ENCODE measurements at regions of chr1 and their contacts with region 1.

Region 1: DNA sequence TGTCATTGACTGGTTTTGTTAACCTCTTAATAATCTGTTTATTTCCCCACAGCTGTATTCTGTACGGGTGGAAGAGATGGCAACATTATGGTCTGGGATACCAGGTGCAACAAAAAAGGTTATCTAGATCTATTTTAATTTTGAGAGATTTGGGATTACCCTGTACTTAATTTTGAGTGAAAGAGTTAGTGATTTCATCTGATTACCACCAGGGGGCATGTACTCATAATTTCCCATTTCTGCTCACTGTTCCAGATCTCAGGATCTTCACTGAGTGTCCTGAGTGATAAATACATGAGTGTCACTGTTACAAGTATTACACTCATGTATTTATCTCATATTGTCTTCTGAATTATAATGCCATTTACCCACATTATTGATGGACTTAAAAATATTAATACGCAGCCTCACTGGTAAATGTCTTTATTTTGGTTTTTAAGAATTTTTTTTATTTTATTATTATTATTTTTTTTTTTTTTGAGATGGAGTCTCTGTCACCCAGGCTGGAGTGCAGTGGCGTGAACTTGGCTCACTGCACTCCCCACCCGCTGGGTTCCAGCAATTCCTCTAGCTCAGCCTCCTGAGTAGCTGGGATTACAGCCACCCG is 27.4 kb downstream of the DTL start:
- DNase-seq: peak; percentile 9
- H3K4me3 ChIP-seq: no peak overlapping the region
- H3K27ac ChIP-seq: no peak overlapping the region
- H3K4me1 ChIP-seq: no peaks in the 10 kb centered on the region
- H3K27me3 ChIP-seq: no peaks in the 10 kb centered on the region
- CTCF ChIP-seq: peak; percentile 54 to 67

Region 2: DNA sequence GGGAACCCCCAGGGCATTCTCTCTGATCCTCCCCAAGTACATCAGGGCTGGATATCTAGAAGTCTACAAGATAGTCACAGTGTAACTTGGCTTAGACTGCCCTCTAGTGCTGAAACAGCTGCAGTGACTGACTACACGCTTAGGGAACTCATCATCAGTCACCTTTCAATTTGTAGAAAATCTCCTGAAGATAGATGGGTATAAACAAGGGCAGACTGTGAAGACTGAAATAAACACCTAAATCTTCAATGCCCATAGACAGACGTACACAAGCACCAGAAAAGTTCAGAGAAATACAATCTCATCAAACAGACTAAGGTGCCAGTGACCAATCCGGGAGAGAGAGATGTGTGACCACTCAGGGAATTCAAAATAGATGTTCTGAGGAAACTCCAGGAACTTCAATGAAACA is 305.1 kb after region 1 on chr1:
- CTCF ChIA-PET with region 1: interaction called, 3 read pairs
- dilution Hi-C with region 1: no loop called
- in situ Hi-C with region 1: loop called in 1 of 2 experiments (anchors 10 kb)
- intact Hi-C with region 1: loop called (anchors 1 kb)
- DNase-seq: peak; percentile 54
- H3K4me3 ChIP-seq: no peak overlapping the region
- H3K27ac ChIP-seq: no peak overlapping the region
- H3K4me1 ChIP-seq: no peaks in the 10 kb centered on the region
- H3K27me3 ChIP-seq: no peaks in the 10 kb centered on the region
- CTCF ChIP-seq: peak; percentile 90 to 96

Region 3: DNA sequence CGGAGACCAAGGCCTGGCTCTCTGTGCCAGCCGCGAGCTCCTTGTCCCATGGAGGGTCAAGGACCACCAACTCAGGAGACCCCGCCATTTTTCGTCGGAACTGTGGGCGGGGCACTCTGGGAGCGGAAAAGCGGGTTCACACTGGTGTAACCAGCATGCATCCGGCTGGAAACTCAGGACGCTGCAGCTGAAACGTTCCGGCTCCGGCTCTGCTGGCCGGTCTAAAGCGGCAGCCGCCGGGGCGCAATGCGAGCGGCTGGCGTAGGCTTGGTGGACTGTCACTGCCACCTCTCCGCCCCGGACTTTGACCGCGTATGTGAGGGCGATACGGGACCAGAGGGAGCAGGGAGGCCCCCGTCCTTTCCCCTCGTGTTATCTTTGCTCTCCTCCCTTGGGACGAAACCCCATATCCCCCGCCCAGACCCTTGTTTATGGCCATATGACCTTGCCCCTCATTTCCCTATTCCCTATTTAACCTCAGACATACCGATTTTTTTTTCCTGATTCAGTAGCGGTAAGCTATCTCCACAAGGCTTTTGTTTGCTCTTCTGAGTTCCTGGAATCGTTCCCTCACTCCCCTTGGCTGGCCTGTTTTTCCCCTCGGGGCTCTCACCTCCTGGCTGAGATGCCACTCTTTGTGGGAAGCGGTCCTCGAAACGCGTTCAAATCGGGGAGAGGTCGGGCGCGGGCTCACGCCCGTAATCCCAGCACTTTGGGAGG is 728.9 kb after region 1 on chr1 and contains the starts of genes NSL1 and TATDN3:
- CTCF ChIA-PET with region 1: no interaction called
- dilution Hi-C with region 1: no loop called
- in situ Hi-C with region 1: loop called (anchors 25 kb)
- intact Hi-C with region 1: no loop called
- DNase-seq: peak; percentile 90
- H3K4me3 ChIP-seq: peak within 1 kb of the TSS; percentile 92 to 97 (median 95)
- H3K27ac ChIP-seq: peak within 1 kb of the TSS; percentile 70
- H3K4me1 ChIP-seq: peaks cover 4% of the 10 kb centered on the region
- H3K27me3 ChIP-seq: no peaks in the 10 kb centered on the region
- CTCF ChIP-seq: no peak
- total RNA-seq, gene NSL1: 14.0 to 21.1 TPM
- total RNA-seq, gene TATDN3: 15.3 to 18.4 TPM

Measured in mammary epithelial cell (primary cell).